Psoas muscle (tissue), 8 donors: ENCODE measurements at regions of chr3 and their contacts with region 1.

Region 1: GRCh38 chr3:32778389-32778788 is 39.4 kb upstream of the TRIM71 start:
- DNase-seq: no peak
- ATAC-seq: no peak
- H3K4me3 ChIP-seq: no peak overlapping the region
- H3K27ac ChIP-seq: no peak overlapping the region
- H3K4me1 ChIP-seq: peaks cover 5% of the 10 kb centered on the region
- H3K27me3 ChIP-seq: no peaks in the 10 kb centered on the region
- CTCF ChIP-seq: no peak

Region 2: DNA sequence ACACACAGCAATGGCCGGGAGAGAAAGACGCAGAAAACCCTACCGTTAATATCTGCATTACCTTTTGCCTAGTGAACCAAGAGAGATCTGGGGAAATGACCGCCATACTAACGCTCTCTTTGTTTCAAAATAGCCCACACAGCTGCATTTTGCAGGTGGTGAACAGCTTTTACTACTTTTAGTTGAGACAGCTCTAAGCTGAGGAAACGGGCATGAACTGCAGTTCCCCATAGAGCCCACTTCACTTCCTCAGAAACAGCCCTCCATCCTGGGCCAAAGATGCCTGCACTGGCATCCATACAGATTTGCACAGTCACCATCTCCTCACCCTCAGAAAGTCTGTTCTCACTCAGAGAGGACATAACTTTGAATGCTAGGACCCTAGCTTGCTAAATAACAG is 751.8 kb before region 1 on chr3:
- intact Hi-C with region 1: loop called in 1 of 2 experiments (anchors 10 kb)
- DNase-seq: no peak
- ATAC-seq: no peak
- H3K4me3 ChIP-seq: no peak overlapping the region
- H3K27ac ChIP-seq: no peak overlapping the region
- H3K4me1 ChIP-seq: no peaks in the 10 kb centered on the region
- H3K27me3 ChIP-seq: no peaks in the 10 kb centered on the region
- CTCF ChIP-seq: no peak